CD4-positive, alpha-beta T cell (primary cell): ENCODE measurements at regions of chr10 and their contacts with region 1.

Region 1: DNA sequence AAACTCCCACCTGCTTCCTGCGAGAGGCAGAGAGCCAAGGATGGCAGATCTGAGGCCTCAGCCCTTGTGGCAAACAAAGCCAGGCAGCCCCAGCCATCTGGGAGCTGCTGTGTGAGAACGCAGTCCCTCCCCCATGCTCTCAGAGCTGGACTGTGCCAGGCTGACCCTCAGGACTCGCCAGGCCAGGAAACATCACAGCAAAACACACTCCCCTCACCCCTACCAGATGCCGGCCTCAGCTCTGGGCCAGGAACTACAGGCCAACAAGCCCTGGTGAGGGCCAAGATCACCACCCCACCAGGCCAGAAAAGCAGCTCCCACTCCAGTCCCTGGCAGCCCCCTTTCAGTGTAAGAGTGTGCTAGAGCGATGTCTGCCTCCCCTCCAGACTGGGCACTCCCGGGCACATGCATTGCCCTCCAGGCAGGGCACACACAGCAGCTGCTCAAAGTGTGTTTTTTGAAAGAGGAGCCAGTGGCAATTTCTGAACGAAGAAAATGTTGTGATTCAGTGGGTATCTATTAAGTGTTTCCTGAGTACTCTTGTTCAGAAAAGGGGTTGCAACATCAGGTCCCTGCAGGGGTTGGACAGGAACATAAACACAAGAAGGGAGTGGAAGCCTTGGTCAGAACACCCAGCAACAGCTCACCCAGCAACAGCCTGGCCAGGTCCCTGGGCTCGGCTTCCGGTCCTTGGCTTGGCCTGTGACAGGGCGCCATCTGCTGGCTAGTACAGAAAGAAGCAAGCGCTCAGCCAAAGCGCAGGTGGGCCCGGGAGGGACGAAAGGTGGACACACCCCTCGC is 18.3 kb downstream of the LRRC20 start:
- DNase-seq: peak; percentile 72 to 91 (median 78)
- ATAC-seq: peak; percentile 98
- H3K4me3 ChIP-seq: no peak overlapping the region
- H3K4me3 Mint-ChIP-seq: no peak overlapping the region
- H3K27ac ChIP-seq: no peak overlapping the region
- H3K27ac Mint-ChIP-seq: no peak overlapping the region
- H3K4me1 ChIP-seq: peaks cover 13% of the 10 kb centered on the region
- H3K4me1 Mint-ChIP-seq: peaks cover 9% of the 10 kb centered on the region
- H3K27me3 ChIP-seq: no peaks in the 10 kb centered on the region
- H3K27me3 Mint-ChIP-seq: no peaks in the 10 kb centered on the region
- CTCF ChIP-seq: peak; percentile 89

Region 2: GRCh38 chr10:70084189-70084588 is 280.0 kb before region 1 on chr10:
- CTCF ChIA-PET with region 1: no interaction called
- POLR2A ChIA-PET with region 1: no interaction called
- intact Hi-C with region 1: loop called (anchors 5 to 10 kb)
- DNase-seq: peak in 1 of 14 experiments; percentile 34
- ATAC-seq: no peak
- H3K4me3 ChIP-seq: no peak overlapping the region
- H3K4me3 Mint-ChIP-seq: no peak overlapping the region
- H3K27ac ChIP-seq: no peak overlapping the region
- H3K27ac Mint-ChIP-seq: no peak overlapping the region
- H3K4me1 ChIP-seq: no peaks in the 10 kb centered on the region
- H3K4me1 Mint-ChIP-seq: no peaks in the 10 kb centered on the region
- H3K27me3 ChIP-seq: no peaks in the 10 kb centered on the region
- H3K27me3 Mint-ChIP-seq: no peaks in the 10 kb centered on the region
- CTCF ChIP-seq: peak; percentile 36

Region 3: DNA sequence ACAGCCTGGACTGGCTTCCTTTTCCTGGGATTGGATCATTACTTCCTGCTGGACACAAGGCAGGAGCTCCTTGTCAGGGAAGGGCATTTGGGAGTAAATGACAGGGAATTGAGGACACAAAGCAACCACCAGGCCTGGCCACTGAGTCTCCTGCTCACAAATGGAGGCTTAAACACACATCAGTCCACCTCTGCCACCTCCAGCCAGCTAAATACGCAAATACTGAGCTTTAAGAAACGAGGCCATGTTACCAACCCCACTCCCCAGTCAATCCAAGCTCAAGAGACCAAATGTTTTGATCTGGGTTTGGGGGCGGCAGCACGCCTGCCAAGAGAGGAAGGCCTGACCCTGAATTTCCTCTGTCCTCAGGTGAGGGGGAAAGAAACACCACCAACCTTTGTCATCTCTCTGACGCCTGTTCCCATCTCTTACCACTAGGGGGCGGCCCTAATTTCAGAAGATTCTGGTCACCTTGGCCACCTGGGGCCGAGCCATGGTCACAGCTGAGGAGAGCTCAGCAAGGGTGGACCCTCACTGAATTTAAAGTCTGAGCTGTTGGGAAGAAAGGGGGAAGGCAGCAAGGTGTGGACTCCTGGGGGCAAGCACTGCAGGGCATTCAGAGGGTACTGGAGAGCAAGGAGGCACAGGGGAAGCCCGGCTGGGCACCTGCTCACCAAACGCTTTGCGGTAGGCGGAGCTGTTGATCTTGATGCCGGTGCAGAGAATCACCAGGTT is 248.1 kb before region 1 on chr10:
- CTCF ChIA-PET with region 1: interaction called, 5 read pairs
- POLR2A ChIA-PET with region 1: no interaction called
- intact Hi-C with region 1: loop called in 1 of 2 experiments (anchors 10 kb)
- DNase-seq: peak; percentile 26 to 76 (median 42)
- ATAC-seq: peak; percentile 88
- H3K4me3 ChIP-seq: no peak overlapping the region
- H3K4me3 Mint-ChIP-seq: no peak overlapping the region
- H3K27ac ChIP-seq: no peak overlapping the region
- H3K27ac Mint-ChIP-seq: no peak overlapping the region
- H3K4me1 ChIP-seq: peaks cover 9% of the 10 kb centered on the region
- H3K4me1 Mint-ChIP-seq: peaks cover 6% of the 10 kb centered on the region
- H3K27me3 ChIP-seq: no peaks in the 10 kb centered on the region
- H3K27me3 Mint-ChIP-seq: no peaks in the 10 kb centered on the region
- CTCF ChIP-seq: peak; percentile 90

Region 4: GRCh38 chr10:70221030-70221429 is 143.1 kb before region 1 on chr10:
- CTCF ChIA-PET with region 1: interaction called, 60 read pairs
- POLR2A ChIA-PET with region 1: interaction called, 37 read pairs
- intact Hi-C with region 1: loop called (anchors 1 kb)
- DNase-seq: peak in 1 of 14 experiments; percentile 8
- ATAC-seq: no peak
- H3K4me3 ChIP-seq: no peak overlapping the region
- H3K4me3 Mint-ChIP-seq: no peak overlapping the region
- H3K27ac ChIP-seq: no peak overlapping the region
- H3K27ac Mint-ChIP-seq: peak overlapping the region; percentile 21
- H3K4me1 ChIP-seq: peaks cover 3% of the 10 kb centered on the region
- H3K4me1 Mint-ChIP-seq: peaks cover 17% of the 10 kb centered on the region
- H3K27me3 ChIP-seq: no peaks in the 10 kb centered on the region
- H3K27me3 Mint-ChIP-seq: no peaks in the 10 kb centered on the region
- CTCF ChIP-seq: no peak

Region 5: DNA sequence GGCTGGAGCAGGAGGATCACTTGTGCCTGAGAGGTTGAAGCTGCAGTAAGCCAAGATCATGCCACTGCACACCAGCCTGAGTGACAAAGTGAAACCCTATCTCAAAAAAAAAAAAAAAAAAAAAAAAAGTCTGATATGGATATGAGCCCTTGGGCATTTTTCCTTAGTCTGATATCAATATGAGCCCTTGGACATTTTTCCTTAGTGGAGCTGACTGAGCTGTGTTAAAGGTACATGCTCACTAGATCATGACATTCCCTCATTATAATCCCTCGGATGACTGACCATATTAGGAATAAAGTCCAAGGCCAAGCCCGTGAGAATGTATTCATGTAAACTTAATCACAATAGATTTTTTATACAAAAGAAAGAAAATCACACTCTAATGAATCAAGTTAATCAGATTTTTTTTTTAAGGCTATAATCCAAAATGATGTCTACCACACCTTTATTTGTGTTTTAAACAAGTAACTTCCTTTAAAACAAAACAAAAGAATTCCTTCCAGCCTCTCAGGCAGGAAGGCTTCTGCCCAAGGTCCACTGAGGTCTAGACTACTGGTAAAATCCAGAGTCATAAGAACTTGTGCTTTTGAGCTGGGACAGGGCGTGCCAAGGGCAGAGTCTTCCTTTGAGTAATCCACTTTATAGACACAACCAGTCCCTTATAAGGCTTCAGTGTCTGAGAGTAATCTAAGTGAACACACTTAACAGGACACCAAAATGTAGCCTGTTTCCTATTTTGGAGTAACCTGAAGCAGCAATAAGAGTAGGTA is 136.4 kb before region 1 on chr10:
- CTCF ChIA-PET with region 1: interaction called, 60 read pairs
- POLR2A ChIA-PET with region 1: interaction called, 9 read pairs
- intact Hi-C with region 1: no loop called
- DNase-seq: no peak
- ATAC-seq: no peak
- H3K4me3 ChIP-seq: no peak overlapping the region
- H3K4me3 Mint-ChIP-seq: no peak overlapping the region
- H3K27ac ChIP-seq: no peak overlapping the region
- H3K27ac Mint-ChIP-seq: no peak overlapping the region
- H3K4me1 ChIP-seq: peaks cover 17% of the 10 kb centered on the region
- H3K4me1 Mint-ChIP-seq: peaks cover 29% of the 10 kb centered on the region
- H3K27me3 ChIP-seq: no peaks in the 10 kb centered on the region
- H3K27me3 Mint-ChIP-seq: no peaks in the 10 kb centered on the region
- CTCF ChIP-seq: no peak

Region 6: DNA sequence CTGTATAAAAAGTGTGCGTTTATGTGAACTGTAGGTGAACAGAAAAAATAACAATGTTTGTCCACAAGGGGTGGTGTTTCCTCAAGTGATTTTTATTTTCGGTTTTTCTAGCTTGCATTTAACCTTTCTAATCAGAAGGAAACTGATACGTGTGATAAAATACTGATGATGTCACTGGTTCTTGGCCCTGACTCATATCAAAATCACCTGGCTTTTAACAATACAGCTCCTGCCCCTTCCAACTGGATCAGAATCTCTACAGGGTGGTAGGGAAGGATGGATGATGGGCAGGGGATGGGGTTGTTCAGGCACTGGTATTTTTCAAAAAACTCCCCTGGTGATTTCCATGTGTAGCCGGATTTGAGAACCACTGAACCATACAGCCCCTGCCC is 91.2 kb before region 1 on chr10:
- CTCF ChIA-PET with region 1: interaction called, 4 read pairs
- POLR2A ChIA-PET with region 1: no interaction called
- intact Hi-C with region 1: loop called in 1 of 2 experiments (anchors 5 kb)
- DNase-seq: peak in 3 of 14 experiments; percentile 60 to 66 (median 62)
- ATAC-seq: peak; percentile 86
- H3K4me3 ChIP-seq: peak overlapping the region; percentile 5
- H3K4me3 Mint-ChIP-seq: no peak overlapping the region
- H3K27ac ChIP-seq: no peak overlapping the region
- H3K27ac Mint-ChIP-seq: no peak overlapping the region
- H3K4me1 ChIP-seq: peaks cover 8% of the 10 kb centered on the region
- H3K4me1 Mint-ChIP-seq: peaks cover 10% of the 10 kb centered on the region
- H3K27me3 ChIP-seq: no peaks in the 10 kb centered on the region
- H3K27me3 Mint-ChIP-seq: no peaks in the 10 kb centered on the region
- CTCF ChIP-seq: peak; percentile 24